Activated T-helper 1 cell treated with anti-CD3 and anti-CD28 coated beads, Interleukin-12 subunit alpha, Interleukin-12 subunit beta, Interleukin-2, Interleukin-4 antibody, amounts not matched to agents 30 ng/mL and 10 ng/mL and 1 ng/mL, durations not matched to agents 14 hours and 24 hours and 36 hours (primary cell): ENCODE measurements at regions of chr12 and their contacts with region 1.

Region 1: DNA sequence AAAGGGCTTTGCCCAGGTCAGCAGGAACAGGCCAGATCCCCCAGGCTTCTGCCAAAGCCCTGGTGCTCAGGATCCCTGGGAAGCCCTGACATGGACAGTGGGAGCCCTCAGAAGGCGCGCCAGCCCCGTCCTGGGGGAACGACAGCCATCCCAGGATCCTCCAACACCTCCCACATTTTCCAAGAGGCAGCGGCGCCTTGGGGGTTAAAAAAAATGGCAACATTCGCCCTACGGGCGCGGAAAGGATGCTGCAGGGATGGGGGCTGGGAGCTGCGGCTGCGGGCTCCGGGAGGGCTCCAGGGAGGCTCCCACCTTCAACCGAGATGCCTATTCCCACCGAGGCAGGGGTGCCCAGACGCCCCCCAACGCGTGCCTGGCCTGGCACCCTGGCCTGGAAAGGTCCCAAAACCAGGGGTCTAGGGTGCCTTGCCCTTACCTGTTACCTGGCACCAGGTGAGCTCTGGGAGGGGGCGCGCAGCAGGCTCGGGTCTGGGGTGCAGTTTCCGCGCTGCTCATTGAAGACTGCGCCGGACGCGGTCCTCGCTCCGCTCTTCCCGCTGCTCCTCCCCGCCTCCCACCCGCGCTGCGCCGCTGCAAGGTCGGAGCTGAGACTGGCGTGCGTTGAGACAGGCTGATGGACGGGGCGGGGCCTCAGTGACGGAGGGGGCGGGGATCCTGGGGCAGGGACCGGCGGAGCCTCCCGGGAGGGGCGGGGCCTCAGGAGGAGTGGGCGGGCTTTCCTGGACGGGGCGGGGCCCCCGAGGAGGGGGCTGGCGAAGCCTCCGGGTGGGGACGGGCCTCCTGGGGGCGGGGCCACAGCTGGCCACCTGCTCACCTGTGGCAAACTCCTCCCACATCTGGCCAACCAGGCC is at the start of gene ABCB9:
- DNase-seq: peak; percentile 84
- H3K4me3 Mint-ChIP-seq: peak within 1 kb of the TSS; percentile 37
- H3K27ac Mint-ChIP-seq: no peak within 1 kb of the TSS
- H3K4me1 Mint-ChIP-seq: peaks cover 12% of the 10 kb centered on the region
- H3K27me3 Mint-ChIP-seq: peaks cover 16% of the 10 kb centered on the region
- total RNA-seq, gene ABCB9: 3.8 and 4.4 TPM in 2 replicates

Region 2: DNA sequence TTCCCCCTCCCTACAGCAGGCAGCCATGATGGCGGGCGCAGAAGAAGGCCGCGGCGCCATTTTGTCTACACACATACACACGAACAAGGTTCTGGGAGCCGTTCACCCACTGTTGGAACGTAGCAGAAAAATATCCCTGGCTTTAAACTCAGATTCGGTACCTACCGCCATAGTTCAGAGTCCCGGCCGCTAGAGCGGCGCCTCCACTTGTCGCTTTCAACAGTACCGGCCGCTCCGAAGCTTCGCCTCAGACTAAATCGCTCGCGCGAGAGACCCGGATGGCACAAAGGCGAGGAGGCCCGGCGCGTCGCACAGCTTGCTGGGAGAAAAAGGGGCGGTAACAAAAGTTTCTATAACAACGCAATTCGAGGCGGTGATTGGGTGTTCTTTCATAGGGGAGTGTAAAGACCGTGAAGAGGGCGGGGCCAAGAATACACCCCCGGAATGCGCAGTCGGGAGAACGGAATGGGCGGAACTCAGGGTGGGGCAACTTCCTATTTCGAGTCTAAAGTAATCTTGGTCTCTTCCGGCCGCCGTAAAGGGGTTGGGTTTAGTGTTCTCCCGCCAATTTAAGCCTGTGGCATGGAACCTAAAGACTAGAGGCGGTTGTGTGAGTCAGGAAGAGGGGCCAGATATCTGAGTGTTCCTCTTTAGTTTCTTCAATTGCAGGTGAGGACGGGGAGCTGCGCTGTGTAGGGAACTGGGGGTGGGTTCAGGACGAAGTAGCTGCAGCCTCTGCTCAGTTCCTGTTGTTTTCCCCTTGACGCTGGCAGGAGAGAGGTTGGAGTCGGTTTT is 439.2 kb before region 1 on chr12 and contains the starts of genes KNTC1 and RSRC2:
- intact Hi-C with region 1: loop called (anchors 2 kb)
- DNase-seq: peak; percentile 99
- H3K4me3 Mint-ChIP-seq: no peak within 1 kb of the TSS
- H3K27ac Mint-ChIP-seq: no peak within 1 kb of the TSS
- H3K4me1 Mint-ChIP-seq: peaks cover 43% of the 10 kb centered on the region
- H3K27me3 Mint-ChIP-seq: no peaks in the 10 kb centered on the region
- total RNA-seq, gene KNTC1: 122 and 126 TPM in 2 replicates
- total RNA-seq, gene RSRC2: 101 and 103 TPM in 2 replicates

Region 3: GRCh38 chr12:122635471-122635870 is 330.6 kb before region 1 on chr12:
- intact Hi-C with region 1: loop called (anchors 10 kb)
- DNase-seq: no peak
- H3K4me3 Mint-ChIP-seq: no peak overlapping the region
- H3K27ac Mint-ChIP-seq: no peak overlapping the region
- H3K4me1 Mint-ChIP-seq: peaks cover 11% of the 10 kb centered on the region
- H3K27me3 Mint-ChIP-seq: no peaks in the 10 kb centered on the region